Dorsolateral prefrontal cortex (tissue), 120 donors: ENCODE measurements at regions of chrX and their contacts with region 1.

Region 1: GRCh38 chrX:47217642-47218279 is 720 bp upstream of the CDK16 start:
- DNase-seq: peak; percentile 93 to 98 (median 96)
- H3K4me3 ChIP-seq: peak overlapping the region; percentile 62 to 95 (median 79)
- H3K27ac ChIP-seq: peak overlapping the region; percentile 88 to 99 (median 96)
- H3K27me3 ChIP-seq: no peaks in the 10 kb centered on the region
- CTCF ChIP-seq: peak in 4 of 56 donors; percentile 9 to 25 (median 18)

Region 2: GRCh38 chrX:47233337-47234113 is 15.8 kb after region 1 on chrX:
- intact Hi-C with region 1: loop called (anchors 1 to 2 kb)
- DNase-seq: peak; percentile 81 to 96 (median 93)
- H3K4me3 ChIP-seq: peak overlapping the region; percentile 40 to 86 (median 72)
- H3K27ac ChIP-seq: peak overlapping the region; percentile 82 to 100 (median 98)
- H3K27me3 ChIP-seq: peaks cover 0 to 33% (median 0%) of the 10 kb centered on the region in 45 donors
- CTCF ChIP-seq: peak in 1 of 56 donors; percentile 12

Region 3: DNA sequence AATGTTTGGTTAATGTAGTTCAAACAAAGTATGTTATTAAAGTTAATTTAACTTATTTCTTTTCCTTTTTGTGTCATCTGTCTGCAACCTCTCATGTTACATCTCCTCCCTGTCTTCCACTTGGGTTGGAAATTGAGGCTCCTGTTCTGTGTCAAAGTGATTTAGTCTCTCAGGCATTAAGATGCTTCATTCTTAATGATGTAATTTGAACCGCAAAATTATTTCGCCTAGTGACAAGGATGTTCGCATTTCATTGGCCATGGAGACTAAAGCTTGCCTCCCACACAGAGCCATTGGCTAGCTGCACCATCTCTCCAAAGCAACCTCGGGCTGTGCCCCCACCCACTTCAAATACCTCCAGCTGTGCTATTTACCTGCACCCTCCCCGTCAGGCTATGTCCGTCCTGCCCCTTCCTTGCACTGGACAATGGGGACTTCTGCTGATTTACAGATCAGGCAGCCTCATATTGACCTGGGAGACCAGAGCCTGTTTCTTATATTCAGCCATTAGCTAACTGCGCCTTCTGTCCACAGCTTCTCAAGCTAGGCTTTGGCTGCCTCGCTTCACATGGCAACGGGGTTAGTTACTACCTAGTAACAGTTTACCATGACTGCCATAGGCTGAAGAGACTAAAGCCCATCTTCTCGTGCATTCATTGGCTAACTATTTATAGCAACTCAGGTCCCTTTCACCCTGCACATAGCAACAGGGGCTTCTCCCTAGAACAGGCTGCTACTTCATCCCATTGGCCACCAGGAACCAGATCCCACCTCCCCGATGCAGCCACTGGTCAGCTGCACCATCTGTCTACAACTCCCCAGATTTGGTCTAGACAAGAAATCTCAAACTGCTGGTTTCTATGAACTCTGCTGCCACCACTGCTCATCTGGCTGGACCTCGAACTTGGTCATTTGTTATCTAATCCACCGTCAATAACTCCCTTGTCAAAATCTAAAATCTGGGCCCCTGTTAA is 144.1 kb after region 1 on chrX:
- intact Hi-C with region 1: loop called in 1 of 2 experiments (anchors 5 kb)
- DNase-seq: peak; percentile 42 to 92 (median 86)
- H3K4me3 ChIP-seq: peak overlapping the region in 58 of 59 donors; percentile 4 to 64 (median 48)
- H3K27ac ChIP-seq: peak overlapping the region in 57 of 59 donors; percentile 5 to 93 (median 81)
- H3K27me3 ChIP-seq: peaks cover 0 to 45% (median 2%) of the 10 kb centered on the region in 45 donors
- CTCF ChIP-seq: peak in 49 of 56 donors; percentile 13 to 54 (median 34)

Region 4: GRCh38 chrX:47501226-47502071 is 283.7 kb after region 1 on chrX:
- intact Hi-C with region 1: no loop called
- DNase-seq: no peak
- H3K4me3 ChIP-seq: no peak overlapping the region
- H3K27ac ChIP-seq: peak overlapping the region in 8 of 59 donors; percentile 7 to 53 (median 35)
- H3K27me3 ChIP-seq: peaks cover 0 to 70% (median 24%) of the 10 kb centered on the region in 45 donors
- CTCF ChIP-seq: no peak